Caco-2 (cell line): ENCODE measurements at regions of chr4 and their contacts with region 1.

Region 1: DNA sequence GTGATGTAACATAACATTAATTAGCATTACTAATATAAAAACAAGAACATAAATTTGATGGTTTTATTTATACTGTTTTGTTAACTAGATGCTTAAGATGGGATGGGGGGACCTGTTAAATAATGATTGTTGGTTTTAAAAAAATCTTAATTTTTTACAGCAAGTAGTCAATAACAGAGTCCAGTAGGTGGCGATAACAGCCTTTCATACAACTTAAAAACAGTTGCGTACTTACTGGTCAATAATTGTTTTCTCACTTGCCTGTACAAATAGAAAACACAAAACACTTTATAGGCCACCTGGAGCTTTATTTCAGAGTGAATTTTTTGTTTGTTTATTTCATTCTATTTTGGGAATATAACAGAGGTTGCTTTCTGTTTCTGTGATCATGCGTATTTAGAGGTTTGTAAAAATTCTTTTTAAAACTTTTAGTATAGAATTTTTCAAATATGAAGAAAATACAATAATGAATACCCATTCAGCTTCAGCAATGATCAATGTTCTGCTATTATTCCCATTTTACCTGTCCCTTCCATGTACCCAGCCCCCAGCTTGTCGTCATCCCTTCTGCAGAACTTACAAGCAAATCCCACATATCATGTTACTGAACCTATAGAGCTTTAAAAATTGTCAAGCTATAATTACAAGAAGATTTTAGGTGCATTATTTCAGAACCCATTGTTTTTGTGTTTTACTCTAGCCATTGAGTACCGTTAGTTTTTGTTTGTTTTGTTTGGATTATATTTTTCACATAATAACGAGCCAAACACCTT is 97.1 kb downstream of the MRPL1 start:
- DNase-seq: peak in 1 of 2 experiments; percentile 47
- H3K4me3 ChIP-seq: no peak overlapping the region
- H3K4me3 Mint-ChIP-seq: no peak overlapping the region
- H3K27ac Mint-ChIP-seq: no peak overlapping the region
- H3K4me1 ChIP-seq: no peaks in the 10 kb centered on the region
- H3K4me1 Mint-ChIP-seq: no peaks in the 10 kb centered on the region
- H3K27me3 ChIP-seq: no peaks in the 10 kb centered on the region
- H3K27me3 Mint-ChIP-seq: no peaks in the 10 kb centered on the region
- CTCF ChIP-seq: peak; percentile 63

Region 2: GRCh38 chr4:77728420-77728819 is 231.3 kb before region 1 on chr4:
- CTCF ChIA-PET with region 1: no interaction called
- POLR2A ChIA-PET with region 1: no interaction called
- intact Hi-C with region 1: no loop called
- DNase-seq: no peak
- H3K4me3 ChIP-seq: no peak overlapping the region
- H3K4me3 Mint-ChIP-seq: no peak overlapping the region
- H3K27ac Mint-ChIP-seq: no peak overlapping the region
- H3K4me1 ChIP-seq: no peaks in the 10 kb centered on the region
- H3K4me1 Mint-ChIP-seq: no peaks in the 10 kb centered on the region
- H3K27me3 ChIP-seq: no peaks in the 10 kb centered on the region
- H3K27me3 Mint-ChIP-seq: no peaks in the 10 kb centered on the region
- CTCF ChIP-seq: no peak

Region 3: DNA sequence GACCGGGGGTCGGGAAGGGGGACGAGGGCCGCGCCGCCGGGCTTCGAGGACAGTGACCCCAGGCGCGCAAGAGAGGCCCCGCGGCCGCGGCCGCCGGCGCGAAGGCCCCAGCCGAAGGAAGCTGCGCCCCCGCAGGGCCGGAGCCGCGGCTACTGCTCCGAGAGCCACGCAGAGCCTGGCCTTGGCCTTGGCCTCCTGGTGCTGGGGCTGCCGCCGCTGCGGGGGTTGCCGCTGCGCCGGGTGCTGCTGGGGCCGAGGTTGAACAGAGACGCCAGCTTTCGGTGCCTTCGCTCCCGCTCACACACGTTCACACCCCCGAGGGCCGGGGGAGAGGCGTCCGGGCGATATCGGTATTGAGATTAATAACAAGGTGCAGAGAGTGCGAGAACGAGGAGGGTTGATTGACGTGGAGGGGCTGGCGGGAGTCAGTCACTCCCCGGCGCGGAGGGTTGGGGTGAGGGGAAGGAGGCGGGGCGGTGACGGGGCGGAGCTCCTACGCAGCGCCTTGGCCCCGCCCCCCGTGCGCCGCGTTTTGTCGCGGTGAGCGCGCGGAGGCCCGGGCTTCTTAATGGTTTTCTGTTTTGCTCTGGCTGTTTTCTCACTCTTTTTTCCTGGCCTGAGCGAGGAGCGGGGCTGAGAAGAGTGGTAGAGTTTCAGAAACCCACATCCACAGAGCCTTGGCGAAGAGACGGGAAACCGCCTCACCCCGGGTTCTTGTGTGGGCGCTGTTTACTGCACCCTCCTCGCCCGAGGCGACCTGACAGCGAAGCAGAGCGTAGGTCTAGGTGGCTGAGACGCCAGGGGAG is 139.7 kb before region 1 on chr4:
- CTCF ChIA-PET with region 1: interaction called, 3 read pairs
- POLR2A ChIA-PET with region 1: no interaction called
- intact Hi-C with region 1: loop called (anchors 5 kb)
- DNase-seq: peak; percentile 82 to 89
- H3K4me3 ChIP-seq: peak overlapping the region; percentile 93
- H3K4me3 Mint-ChIP-seq: peak overlapping the region; percentile 96
- H3K27ac Mint-ChIP-seq: peak overlapping the region; percentile 91
- H3K4me1 ChIP-seq: peaks cover 7% of the 10 kb centered on the region
- H3K4me1 Mint-ChIP-seq: no peaks in the 10 kb centered on the region
- H3K27me3 ChIP-seq: no peaks in the 10 kb centered on the region
- H3K27me3 Mint-ChIP-seq: peaks cover 5% of the 10 kb centered on the region
- CTCF ChIP-seq: no peak

Region 4: GRCh38 chr4:78410676-78411075 is 450.9 kb after region 1 on chr4:
- CTCF ChIA-PET with region 1: no interaction called
- POLR2A ChIA-PET with region 1: no interaction called
- intact Hi-C with region 1: no loop called
- DNase-seq: no peak
- H3K4me3 ChIP-seq: no peak overlapping the region
- H3K4me3 Mint-ChIP-seq: no peak overlapping the region
- H3K27ac Mint-ChIP-seq: no peak overlapping the region
- H3K4me1 ChIP-seq: no peaks in the 10 kb centered on the region
- H3K4me1 Mint-ChIP-seq: no peaks in the 10 kb centered on the region
- H3K27me3 ChIP-seq: no peaks in the 10 kb centered on the region
- H3K27me3 Mint-ChIP-seq: no peaks in the 10 kb centered on the region
- CTCF ChIP-seq: no peak

Region 5: GRCh38 chr4:78938868-78939666 is 979.3 kb after region 1 on chr4 and contains the start of gene PAQR3:
- CTCF ChIA-PET with region 1: no interaction called
- POLR2A ChIA-PET with region 1: no interaction called
- intact Hi-C with region 1: loop called (anchors 10 kb)
- DNase-seq: peak; percentile 70 to 88
- H3K4me3 ChIP-seq: peak within 1 kb of the TSS; percentile 69
- H3K4me3 Mint-ChIP-seq: peak within 1 kb of the TSS; percentile 92
- H3K27ac Mint-ChIP-seq: peak within 1 kb of the TSS; percentile 65
- H3K4me1 ChIP-seq: peaks cover 17% of the 10 kb centered on the region; the same call in 1 of the 2 replicates
- H3K4me1 Mint-ChIP-seq: no peaks in the 10 kb centered on the region
- H3K27me3 ChIP-seq: no peaks in the 10 kb centered on the region
- H3K27me3 Mint-ChIP-seq: peaks cover 10% of the 10 kb centered on the region
- CTCF ChIP-seq: no peak
- total RNA-seq, gene PAQR3: 13.3 and 13.8 TPM in 2 replicates